ENCODE measurements at regions of chr16 and their contacts with region 1.

Region 1: DNA sequence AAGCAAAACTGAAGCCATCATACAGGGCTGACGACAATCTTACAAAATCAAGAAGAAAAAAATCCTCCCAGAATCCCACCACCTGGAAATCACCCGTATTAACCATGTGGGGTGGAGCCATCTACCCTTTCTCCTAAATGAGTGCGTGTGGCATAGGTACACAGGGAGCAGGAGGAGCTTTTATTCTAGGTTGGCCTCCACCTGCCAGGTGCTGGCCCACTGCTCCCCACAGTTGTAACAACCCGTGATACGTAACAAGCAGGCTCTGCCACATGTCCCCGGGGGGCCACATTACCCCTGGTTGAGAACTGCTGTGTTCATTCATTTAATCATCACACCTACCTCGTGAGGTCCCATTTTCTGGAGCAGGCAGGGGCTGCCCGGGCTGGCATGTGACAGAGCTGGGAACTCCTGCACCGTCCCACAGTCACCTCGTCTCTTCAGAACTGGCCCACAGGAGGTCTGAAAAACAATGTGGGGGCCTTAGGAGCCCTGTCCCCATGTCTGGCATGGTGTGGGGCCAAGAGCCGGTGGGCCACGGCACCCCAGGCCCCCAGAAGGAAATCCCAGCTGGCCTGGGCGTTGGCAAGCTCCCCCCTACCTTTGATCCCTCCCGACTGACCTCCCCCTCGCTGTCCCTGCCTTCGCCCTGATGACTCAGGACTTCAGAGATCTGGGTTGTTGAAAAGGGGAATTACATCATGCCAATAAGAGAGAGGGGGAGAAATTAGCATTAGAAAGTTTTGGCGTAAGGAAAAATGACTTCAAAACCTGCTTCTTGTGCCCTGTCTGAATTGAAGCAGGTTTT is 12.9 kb downstream of the CMIP start:
- DNase-seq: no peak
- H3K4me3 Mint-ChIP-seq: no peak overlapping the region
- H3K27ac Mint-ChIP-seq: no peak overlapping the region
- H3K4me1 Mint-ChIP-seq: peaks cover 42% of the 10 kb centered on the region
- H3K27me3 Mint-ChIP-seq: no peaks in the 10 kb centered on the region

Region 2: GRCh38 chr16:81265657-81266451 is 191.7 kb before region 1 on chr16:
- CTCF ChIA-PET with region 1: no interaction called
- POLR2A ChIA-PET with region 1: no interaction called
- intact Hi-C with region 1: no loop called
- DNase-seq: no peak
- H3K4me3 Mint-ChIP-seq: no peak overlapping the region
- H3K27ac Mint-ChIP-seq: no peak overlapping the region
- H3K4me1 Mint-ChIP-seq: no peaks in the 10 kb centered on the region
- H3K27me3 Mint-ChIP-seq: peaks cover 10% of the 10 kb centered on the region

Region 3: DNA sequence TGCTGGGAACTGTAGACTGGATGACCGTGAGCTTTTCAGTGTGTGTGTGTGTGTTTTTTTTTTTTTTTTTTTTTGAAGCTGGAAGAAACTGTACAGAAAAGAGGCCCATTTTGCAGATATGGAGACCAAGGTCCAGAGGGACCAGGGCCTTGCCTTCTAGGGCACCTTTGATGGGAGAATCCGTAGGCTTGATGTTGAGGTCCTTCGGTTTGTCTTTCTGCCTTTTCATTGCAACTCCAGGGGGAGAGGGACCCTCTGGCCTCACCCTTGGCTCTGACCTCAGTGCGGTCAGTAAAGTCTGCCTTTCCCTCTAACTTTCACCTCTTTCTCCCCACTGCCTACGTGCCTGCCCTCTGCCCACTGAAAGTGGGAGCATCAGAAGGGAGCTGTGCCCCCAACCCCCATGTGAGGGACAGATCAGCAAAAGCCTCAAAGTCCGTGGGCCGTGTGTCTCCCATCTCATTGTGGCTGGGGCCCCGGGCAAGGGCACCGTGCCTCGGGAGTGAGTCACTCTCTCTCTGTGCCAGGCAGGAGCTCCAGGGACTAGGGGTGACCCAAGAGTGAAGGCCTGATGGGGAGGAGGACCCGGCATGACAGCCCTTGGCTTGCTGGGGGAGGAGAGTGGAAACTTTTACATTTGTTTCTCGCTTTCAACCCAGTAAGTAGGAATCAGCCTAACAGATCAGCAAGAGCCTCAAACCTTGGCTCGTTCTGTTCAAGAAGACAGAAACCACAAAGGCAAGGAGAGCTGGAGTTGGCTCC is 110.6 kb after region 1 on chr16:
- CTCF ChIA-PET with region 1: no interaction called
- POLR2A ChIA-PET with region 1: no interaction called
- intact Hi-C with region 1: loop called (anchors 10 kb)
- DNase-seq: peak; percentile 83
- H3K4me3 Mint-ChIP-seq: no peak overlapping the region
- H3K27ac Mint-ChIP-seq: peak overlapping the region; percentile 70
- H3K4me1 Mint-ChIP-seq: peaks cover 28% of the 10 kb centered on the region
- H3K27me3 Mint-ChIP-seq: no peaks in the 10 kb centered on the region